Vagina (tissue), 2 donors: ENCODE measurements at regions of chr6 and their contacts with region 1.

Region 1: DNA sequence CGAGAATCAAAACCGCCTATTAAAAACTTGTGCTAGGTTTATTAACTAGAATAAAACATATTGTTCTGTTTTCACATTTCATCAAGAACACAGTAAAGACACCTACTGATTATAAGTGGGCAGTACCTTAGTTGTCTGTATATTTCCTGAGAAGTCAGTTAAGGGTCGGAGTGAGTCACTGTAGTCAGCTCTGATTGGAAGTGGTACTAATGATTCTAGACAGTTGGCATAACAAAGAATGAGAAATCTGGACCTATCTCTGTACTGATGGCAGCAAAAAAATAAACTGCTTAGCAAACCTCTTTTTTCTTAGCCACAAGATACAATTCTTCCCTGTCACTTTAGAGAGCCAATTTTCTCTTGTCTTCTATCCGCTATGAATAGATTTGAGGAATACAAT is 387.3 kb upstream of the ADGRB3 start:
- DNase-seq: no peak
- H3K4me3 ChIP-seq: no peak overlapping the region
- H3K27ac ChIP-seq: no peak overlapping the region
- H3K4me1 ChIP-seq: no peaks in the 10 kb centered on the region
- H3K27me3 ChIP-seq: no peaks in the 10 kb centered on the region
- CTCF ChIP-seq: no peak
- POLR2A ChIP-seq: no peak

Region 2: DNA sequence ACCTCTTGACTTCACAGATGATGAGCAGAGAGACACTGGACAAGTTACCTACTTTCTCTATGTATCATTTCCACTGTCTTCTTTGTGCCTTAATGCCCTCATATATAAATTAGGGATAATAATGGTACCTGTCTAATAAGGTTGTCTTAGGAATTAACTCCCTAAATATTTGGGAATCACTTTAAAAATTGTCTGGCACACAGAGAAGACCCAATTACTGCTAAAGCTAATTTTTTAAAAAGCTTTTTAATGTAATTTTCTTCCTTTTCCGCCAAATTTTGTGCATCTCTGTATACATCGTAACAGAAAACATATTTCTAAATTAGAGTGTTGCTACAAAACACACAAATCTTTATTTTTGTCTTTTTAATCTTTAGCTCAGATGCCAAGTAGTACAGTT is 429.5 kb before region 1 on chr6:
- intact Hi-C with region 1: no loop called
- DNase-seq: no peak
- H3K4me3 ChIP-seq: no peak overlapping the region
- H3K27ac ChIP-seq: no peak overlapping the region
- H3K4me1 ChIP-seq: no peaks in the 10 kb centered on the region
- H3K27me3 ChIP-seq: no peaks in the 10 kb centered on the region
- CTCF ChIP-seq: no peak
- POLR2A ChIP-seq: no peak

Region 3: GRCh38 chr6:68372991-68373390 is 125.2 kb after region 1 on chr6:
- intact Hi-C with region 1: no loop called
- DNase-seq: no peak
- H3K4me3 ChIP-seq: no peak overlapping the region
- H3K27ac ChIP-seq: no peak overlapping the region
- H3K4me1 ChIP-seq: no peaks in the 10 kb centered on the region
- H3K27me3 ChIP-seq: no peaks in the 10 kb centered on the region
- CTCF ChIP-seq: no peak
- POLR2A ChIP-seq: no peak

Region 4: DNA sequence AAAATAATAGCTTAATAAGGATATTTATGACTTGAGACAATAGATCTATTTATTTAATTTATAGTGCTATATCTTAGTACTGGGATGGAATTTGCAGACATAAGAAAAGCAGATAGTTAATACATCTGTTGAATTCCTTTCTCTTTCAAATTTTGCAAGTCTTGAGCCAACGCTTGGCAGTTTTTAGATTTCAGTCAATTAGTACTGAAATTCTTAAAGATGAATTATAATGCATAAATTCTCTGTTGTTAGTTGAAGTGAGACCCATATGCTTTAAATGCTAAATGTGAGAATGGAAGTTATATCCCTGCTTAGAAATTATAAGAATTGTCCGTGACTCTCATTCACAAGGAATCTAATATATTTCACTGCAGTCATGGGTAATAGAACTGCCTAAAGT is 162.2 kb after region 1 on chr6:
- intact Hi-C with region 1: loop called (anchors 5 kb)
- DNase-seq: no peak
- H3K4me3 ChIP-seq: no peak overlapping the region
- H3K27ac ChIP-seq: no peak overlapping the region
- H3K4me1 ChIP-seq: no peaks in the 10 kb centered on the region
- H3K27me3 ChIP-seq: no peaks in the 10 kb centered on the region
- CTCF ChIP-seq: no peak
- POLR2A ChIP-seq: no peak